H1 (cell line): ENCODE measurements at regions of chr15 and their contacts with region 1.

Region 1: DNA sequence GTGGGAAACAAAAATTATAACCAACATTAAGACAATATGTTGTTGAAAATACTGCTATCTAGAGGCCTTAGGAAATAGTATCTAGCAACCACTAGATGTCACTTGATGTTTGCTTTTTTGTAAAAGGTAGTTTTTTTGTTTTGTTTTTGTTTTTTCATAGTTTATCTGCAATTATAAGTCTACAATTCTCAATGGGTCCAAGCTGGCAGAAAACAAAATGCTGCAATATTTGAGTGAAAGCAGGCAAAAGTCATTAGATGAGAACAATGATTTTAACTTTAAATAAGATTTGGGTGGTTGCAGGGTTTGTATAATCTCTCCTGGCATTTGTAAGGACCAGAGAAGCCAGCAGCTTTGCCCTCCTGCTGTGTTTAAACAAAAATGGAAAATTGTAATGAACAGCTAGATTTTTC is 27.0 kb downstream of the DUT start:
- DNase-seq: no peak
- H3K4me3 ChIP-seq: no peak overlapping the region
- H3K27ac ChIP-seq: no peak overlapping the region
- H3K4me1 ChIP-seq: no peaks in the 10 kb centered on the region
- H3K27me3 ChIP-seq: no peaks in the 10 kb centered on the region
- CTCF ChIP-seq: peak in 2 of 3 experiments; percentile 32 to 42; a peak in 2 of 4 replicates
- EP300 ChIP-seq: no peak
- POLR2A ChIP-seq: no peak
- RAD21 ChIP-seq: peak; percentile 61 to 77

Region 2: GRCh38 chr15:48307586-48307985 is 50.6 kb before region 1 on chr15:
- CTCF ChIA-PET with region 1: no interaction called
- POLR2A ChIA-PET with region 1: no interaction called
- DNase-seq: no peak
- H3K4me3 ChIP-seq: no peak overlapping the region
- H3K27ac ChIP-seq: no peak overlapping the region
- H3K4me1 ChIP-seq: peaks cover 4 to 13% (median 7%) of the 10 kb centered on the region in 4 experiments; a peak in 5 of 7 replicates
- H3K27me3 ChIP-seq: no peaks in the 10 kb centered on the region
- CTCF ChIP-seq: no peak
- EP300 ChIP-seq: no peak
- POLR2A ChIP-seq: no peak
- RAD21 ChIP-seq: no peak

Region 3: GRCh38 chr15:48336940-48337339 is 21.3 kb before region 1 on chr15:
- CTCF ChIA-PET with region 1: interaction called, 43 read pairs
- POLR2A ChIA-PET with region 1: no interaction called
- DNase-seq: no peak
- H3K4me3 ChIP-seq: no peak overlapping the region
- H3K27ac ChIP-seq: no peak overlapping the region
- H3K4me1 ChIP-seq: peaks cover 3 to 9% (median 3%) of the 10 kb centered on the region in 4 experiments; a peak in 5 of 7 replicates
- H3K27me3 ChIP-seq: no peaks in the 10 kb centered on the region
- CTCF ChIP-seq: peak; percentile 56 to 75 (median 61)
- EP300 ChIP-seq: no peak
- POLR2A ChIP-seq: no peak
- RAD21 ChIP-seq: peak; percentile 65 to 78

Region 4: GRCh38 chr15:48373821-48374451 is 15.7 kb after region 1 on chr15:
- CTCF ChIA-PET with region 1: interaction called, 33 read pairs
- POLR2A ChIA-PET with region 1: no interaction called
- DNase-seq: no peak
- H3K4me3 ChIP-seq: no peak overlapping the region
- H3K27ac ChIP-seq: no peak overlapping the region
- H3K4me1 ChIP-seq: no peaks in the 10 kb centered on the region
- H3K27me3 ChIP-seq: no peaks in the 10 kb centered on the region
- CTCF ChIP-seq: no peak
- EP300 ChIP-seq: no peak
- POLR2A ChIP-seq: no peak
- RAD21 ChIP-seq: no peak

Region 5: DNA sequence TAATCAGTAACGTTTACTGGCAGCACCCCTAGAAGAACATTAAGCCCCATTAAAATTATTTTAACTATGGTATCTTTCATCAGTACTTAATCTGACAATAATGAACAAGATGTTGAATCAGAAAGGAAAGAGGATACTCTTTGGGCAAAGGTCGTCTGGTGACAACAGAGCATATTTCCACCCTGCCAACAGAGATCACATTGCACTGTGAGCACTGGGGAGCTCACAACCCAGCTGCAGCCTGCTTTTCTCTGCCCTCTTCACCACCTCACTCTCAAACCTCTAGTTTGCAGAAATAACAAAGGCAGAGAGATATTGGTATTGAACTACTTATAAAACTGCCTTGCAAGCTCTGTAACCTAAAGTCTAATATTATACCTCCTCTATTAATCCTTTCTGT is 157.3 kb after region 1 on chr15:
- CTCF ChIA-PET with region 1: interaction called, 36 read pairs
- POLR2A ChIA-PET with region 1: no interaction called
- DNase-seq: no peak
- H3K4me3 ChIP-seq: no peak overlapping the region
- H3K27ac ChIP-seq: no peak overlapping the region
- H3K4me1 ChIP-seq: no peaks in the 10 kb centered on the region
- H3K27me3 ChIP-seq: peaks cover 0 to 2% (median 0%) of the 10 kb centered on the region in 4 experiments; a peak in 1 of 7 replicates
- CTCF ChIP-seq: no peak
- EP300 ChIP-seq: no peak
- POLR2A ChIP-seq: no peak
- RAD21 ChIP-seq: no peak

Region 6: GRCh38 chr15:48520376-48521155 is 162.3 kb after region 1 on chr15:
- CTCF ChIA-PET with region 1: interaction called, 36 read pairs
- POLR2A ChIA-PET with region 1: no interaction called
- DNase-seq: peak; percentile 54 to 74
- H3K4me3 ChIP-seq: no peak overlapping the region
- H3K27ac ChIP-seq: no peak overlapping the region
- H3K4me1 ChIP-seq: no peaks in the 10 kb centered on the region
- H3K27me3 ChIP-seq: no peaks in the 10 kb centered on the region
- CTCF ChIP-seq: peak; percentile 78 to 83 (median 82)
- EP300 ChIP-seq: no peak
- POLR2A ChIP-seq: no peak
- RAD21 ChIP-seq: peak; percentile 87 to 91

Region 7: GRCh38 chr15:48573780-48574179 is 215.5 kb after region 1 on chr15:
- CTCF ChIA-PET with region 1: no interaction called
- POLR2A ChIA-PET with region 1: no interaction called
- DNase-seq: no peak
- H3K4me3 ChIP-seq: no peak overlapping the region
- H3K27ac ChIP-seq: no peak overlapping the region
- H3K4me1 ChIP-seq: no peaks in the 10 kb centered on the region
- H3K27me3 ChIP-seq: no peaks in the 10 kb centered on the region
- CTCF ChIP-seq: no peak
- EP300 ChIP-seq: no peak
- POLR2A ChIP-seq: no peak
- RAD21 ChIP-seq: no peak